Activated CD4-positive, alpha-beta memory T cell treated with anti-CD3 and anti-CD28 coated beads for 36 hours (primary cell): ENCODE measurements at regions of chr5 and their contacts with region 1.

Region 1: DNA sequence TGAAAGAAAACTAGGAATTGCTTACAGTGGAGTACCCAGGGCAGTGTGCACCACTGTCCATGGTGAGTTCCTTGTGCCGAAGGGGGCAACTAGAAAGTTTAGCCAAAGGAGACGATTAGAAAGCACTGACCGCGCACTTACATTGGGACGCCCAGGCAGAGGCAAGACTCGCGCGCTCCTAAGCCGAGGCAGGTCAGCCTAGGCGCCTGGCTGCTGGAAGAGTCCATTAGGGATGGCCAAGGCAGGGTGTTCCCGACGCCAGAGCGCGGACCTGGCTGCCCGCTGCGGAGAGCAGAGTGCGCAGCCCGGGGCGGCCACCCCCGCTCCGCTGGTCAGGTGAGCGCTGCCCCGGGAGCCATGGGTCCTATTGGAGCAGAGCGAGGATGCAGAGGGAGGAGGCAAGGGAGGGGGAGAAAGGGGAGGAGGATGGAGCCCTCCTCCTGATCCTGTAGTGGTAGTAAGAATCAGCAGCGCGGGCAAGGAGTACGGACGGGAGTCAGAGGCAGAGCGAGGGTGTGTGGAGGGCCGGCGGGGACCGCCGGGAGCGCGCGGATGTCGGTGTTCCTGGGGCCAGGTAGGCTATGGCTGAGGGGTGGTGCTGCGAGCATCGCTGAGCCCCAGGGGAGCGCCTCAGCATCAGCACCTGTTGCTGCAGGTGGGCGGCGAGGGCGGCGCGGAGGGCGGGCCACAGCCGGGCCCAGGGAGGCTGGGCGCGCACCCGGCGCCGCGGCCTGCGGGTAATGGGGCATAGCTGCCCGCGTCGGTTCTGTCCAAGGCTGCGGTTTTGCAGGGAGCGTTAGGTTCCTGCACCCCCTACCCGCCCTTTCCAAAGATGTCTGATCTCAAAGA is at the start of gene ADGRV1:
- DNase-seq: peak; percentile 21
- H3K4me3 Mint-ChIP-seq: peak within 1 kb of the TSS; percentile 54
- H3K27ac Mint-ChIP-seq: no peak within 1 kb of the TSS
- H3K4me1 Mint-ChIP-seq: peaks cover 6% of the 10 kb centered on the region
- H3K27me3 Mint-ChIP-seq: peaks cover 39% of the 10 kb centered on the region
- total RNA-seq, gene ADGRV1: 0.05 TPM in 1 of 2 experiments, not detected in the other

Region 2: DNA sequence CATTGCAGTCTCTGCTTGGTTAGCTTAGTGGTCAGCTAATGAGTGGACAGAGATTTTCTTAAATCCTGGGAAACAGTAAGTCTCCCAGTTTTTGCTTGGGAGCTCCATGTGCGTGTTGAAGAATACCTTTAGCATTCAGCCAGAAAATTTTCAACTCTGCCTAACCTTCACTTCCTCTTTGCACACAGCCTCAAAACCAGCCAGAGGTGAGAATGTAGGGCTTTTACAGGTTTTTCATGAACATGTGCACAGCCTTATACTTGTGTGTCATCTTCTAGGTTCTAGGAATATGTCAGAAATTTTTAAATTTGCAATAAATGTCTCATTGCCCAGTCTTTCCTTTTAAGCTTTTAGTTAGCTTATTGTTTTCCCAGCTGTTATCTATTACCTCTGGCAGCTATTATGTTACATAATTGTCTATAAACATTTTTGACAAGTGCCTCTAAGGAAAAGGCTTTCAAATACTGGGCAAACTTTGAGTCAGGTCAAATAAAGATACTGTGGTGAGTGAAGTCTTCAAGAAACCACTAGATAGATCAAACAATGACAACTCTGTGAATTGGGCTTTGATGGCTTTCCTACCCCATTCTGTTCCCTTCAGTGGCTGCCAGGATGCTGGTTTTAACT is 12.7 kb after region 1 on chr5:
- CTCF ChIA-PET with region 1: no interaction called
- POLR2A ChIA-PET with region 1: no interaction called
- intact Hi-C with region 1: no loop called
- DNase-seq: no peak
- H3K4me3 Mint-ChIP-seq: no peak overlapping the region
- H3K27ac Mint-ChIP-seq: no peak overlapping the region
- H3K4me1 Mint-ChIP-seq: no peaks in the 10 kb centered on the region
- H3K27me3 Mint-ChIP-seq: peaks cover 22% of the 10 kb centered on the region

Region 3: GRCh38 chr5:90606539-90606938 is 48.0 kb after region 1 on chr5:
- CTCF ChIA-PET with region 1: no interaction called
- POLR2A ChIA-PET with region 1: no interaction called
- intact Hi-C with region 1: loop called (anchors 5 kb)
- DNase-seq: no peak
- H3K4me3 Mint-ChIP-seq: no peak overlapping the region
- H3K27ac Mint-ChIP-seq: no peak overlapping the region
- H3K4me1 Mint-ChIP-seq: no peaks in the 10 kb centered on the region
- H3K27me3 Mint-ChIP-seq: peaks cover 15% of the 10 kb centered on the region